AG04450 (cell line): ENCODE measurements at regions of chr19 and their contacts with region 1.

Region 1: DNA sequence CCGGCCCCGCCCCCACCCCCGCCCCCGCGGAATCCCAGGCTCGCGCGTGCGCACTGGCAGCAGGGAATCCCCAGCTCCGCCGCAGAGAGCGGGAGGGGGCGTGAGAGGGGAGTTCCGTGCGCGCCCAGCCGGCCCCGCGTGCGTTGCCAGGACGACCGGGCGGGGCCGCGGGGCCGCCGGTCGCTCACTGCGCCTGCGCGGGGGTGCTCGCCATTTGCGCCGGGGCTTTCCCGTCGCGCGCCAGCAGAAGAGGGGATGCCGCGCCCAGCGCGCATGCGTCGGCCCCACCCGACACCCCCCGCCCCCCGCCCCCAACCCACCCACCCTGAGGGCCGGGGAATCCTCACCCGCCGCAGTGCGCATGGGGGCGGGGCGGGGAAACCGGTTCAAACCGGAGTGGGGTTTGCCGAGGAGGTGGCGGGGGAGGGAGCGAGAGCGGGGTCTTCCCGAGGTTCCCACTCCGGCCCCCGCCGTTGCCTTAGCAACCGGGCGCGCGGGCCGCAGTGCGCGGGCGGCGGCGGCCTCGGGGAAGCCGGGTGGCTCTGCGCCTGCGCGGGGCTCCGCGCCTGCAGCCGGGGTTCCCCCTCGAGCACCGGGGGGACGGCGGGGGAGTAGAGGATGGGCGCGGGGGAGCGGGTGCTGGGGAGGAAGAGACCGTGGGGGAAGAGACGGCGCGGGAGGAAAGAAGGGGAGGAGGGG is 15.1 kb downstream of the CCDC124 start:
- DNase-seq: peak; percentile 70
- H3K4me3 ChIP-seq: peak overlapping the region; percentile 61
- H3K27ac ChIP-seq: no peak overlapping the region
- H3K27me3 ChIP-seq: peaks cover 39% of the 10 kb centered on the region
- CTCF ChIP-seq: no peak

Region 2: GRCh38 chr19:17847538-17848366 is 100.2 kb before region 1 on chr19 and contains the start of gene JAK3:
- CTCF ChIA-PET with region 1: no interaction called
- POLR2A ChIA-PET with region 1: no interaction called
- DNase-seq: no peak
- H3K4me3 ChIP-seq: peak within 1 kb of the TSS; percentile 45
- H3K27ac ChIP-seq: peak within 1 kb of the TSS; percentile 21
- H3K27me3 ChIP-seq: peaks cover 2% of the 10 kb centered on the region
- CTCF ChIP-seq: no peak
- polyA plus RNA-seq, gene JAK3: 0.99 and 1.4 TPM in 2 replicates

Region 3: GRCh38 chr19:17922138-17922537 is 25.8 kb before region 1 on chr19:
- CTCF ChIA-PET with region 1: no interaction called
- POLR2A ChIA-PET with region 1: no interaction called
- DNase-seq: no peak
- H3K4me3 ChIP-seq: no peak overlapping the region
- H3K27ac ChIP-seq: no peak overlapping the region
- H3K27me3 ChIP-seq: no peaks in the 10 kb centered on the region
- CTCF ChIP-seq: no peak

Region 4: DNA sequence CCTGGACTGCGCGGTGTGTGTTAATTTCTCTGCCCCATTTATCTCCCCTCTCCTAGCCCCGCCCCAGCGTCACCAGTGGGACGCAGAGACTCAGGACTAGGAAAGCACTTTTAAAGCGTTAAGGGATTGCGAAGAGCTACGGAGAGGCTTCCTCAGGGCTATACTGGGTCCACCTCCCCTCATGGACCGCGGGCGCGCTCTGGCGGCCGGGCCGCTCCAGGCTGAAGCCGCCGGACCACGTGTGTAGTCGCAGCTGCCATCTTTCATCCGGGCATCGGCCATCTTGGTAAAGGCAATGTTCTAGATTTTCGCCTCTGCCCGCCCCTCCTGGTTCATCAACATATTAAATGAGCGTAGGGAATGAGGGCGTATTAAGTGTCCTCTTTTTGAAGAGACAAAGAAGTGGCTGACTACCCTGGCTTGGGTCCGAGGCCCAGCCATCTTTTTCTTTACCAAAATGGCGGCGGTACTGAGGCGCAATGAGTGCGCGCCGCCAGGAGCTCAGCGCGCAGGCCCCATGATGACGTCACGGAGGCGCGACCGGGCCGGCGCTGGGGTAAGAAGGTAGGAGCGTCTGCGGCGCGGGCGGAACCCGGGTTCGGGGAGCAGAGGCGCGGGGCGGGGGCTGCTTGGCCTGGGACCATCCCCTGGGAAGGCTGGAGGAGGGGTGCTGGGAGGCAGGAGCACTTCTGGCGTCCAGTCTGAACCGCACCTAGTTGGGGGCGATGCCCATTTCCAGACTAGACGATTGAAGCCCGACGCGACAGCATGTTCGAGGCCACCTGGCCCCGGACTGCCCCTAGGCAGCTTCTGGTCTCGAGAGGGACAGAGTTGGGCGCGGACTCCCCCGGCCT is 15.3 kb before region 1 on chr19 and contains the start of gene CCDC124:
- CTCF ChIA-PET with region 1: interaction called, 10 read pairs
- POLR2A ChIA-PET with region 1: interaction called, 5 read pairs
- DNase-seq: peak; percentile 68
- H3K4me3 ChIP-seq: peak within 1 kb of the TSS; percentile 98
- H3K27ac ChIP-seq: peak within 1 kb of the TSS; percentile 84
- H3K27me3 ChIP-seq: peaks cover 3% of the 10 kb centered on the region
- CTCF ChIP-seq: peak; percentile 94
- polyA plus RNA-seq, gene CCDC124: 36.0 and 40.9 TPM in 2 replicates